ENCODE measurements at regions of chr17 and their contacts with region 1.

Region 1: DNA sequence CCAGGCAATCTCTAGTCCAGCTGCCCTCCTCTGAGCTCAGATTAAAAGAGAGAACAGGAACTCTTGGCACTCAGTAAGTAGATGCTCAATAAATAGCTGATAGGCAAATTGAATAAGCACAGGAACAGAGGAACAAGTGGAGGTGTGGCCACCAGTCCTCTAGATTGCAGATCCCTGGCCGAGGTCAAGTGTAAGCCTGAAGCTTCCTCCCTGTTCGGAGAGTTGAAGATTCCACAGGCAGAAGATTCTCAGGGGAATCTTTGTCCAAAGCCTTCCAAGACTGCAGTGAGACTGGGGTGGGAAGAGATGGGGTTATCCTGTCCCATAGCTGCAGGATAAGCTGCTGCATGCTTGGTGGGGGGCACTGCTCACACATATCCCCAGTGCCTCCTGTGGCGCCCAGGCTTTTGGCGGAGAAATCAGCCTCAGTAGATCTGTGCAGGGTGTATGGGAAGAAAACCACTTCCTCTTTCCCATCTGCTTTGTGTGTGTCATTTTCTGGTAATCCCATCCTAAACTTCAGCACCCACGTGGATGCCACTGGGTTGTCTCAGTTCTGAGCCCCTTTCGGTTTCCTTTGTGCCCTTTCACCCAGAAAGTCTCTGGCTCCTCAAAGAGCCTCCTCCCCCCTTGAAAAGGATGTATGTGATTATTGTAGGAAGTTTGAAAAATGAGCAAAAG is 12.1 kb downstream of the CD300A start:
- DNase-seq: peak in 2 of 5 donors; percentile 24 to 50
- H3K4me3 ChIP-seq: peak overlapping the region; percentile 9 to 30
- H3K4me3 Mint-ChIP-seq: peak overlapping the region; percentile 8 to 83 (median 77)
- H3K27ac ChIP-seq: no peak overlapping the region
- H3K27ac Mint-ChIP-seq: peak overlapping the region; percentile 56 to 93 (median 86)
- H3K4me1 ChIP-seq: peaks cover 58% of the 10 kb centered on the region
- H3K4me1 Mint-ChIP-seq: peaks cover 43 to 71% (median 57%) of the 10 kb centered on the region in 4 donors
- H3K27me3 ChIP-seq: no peaks in the 10 kb centered on the region
- H3K27me3 Mint-ChIP-seq: no peaks in the 10 kb centered on the region

Region 2: DNA sequence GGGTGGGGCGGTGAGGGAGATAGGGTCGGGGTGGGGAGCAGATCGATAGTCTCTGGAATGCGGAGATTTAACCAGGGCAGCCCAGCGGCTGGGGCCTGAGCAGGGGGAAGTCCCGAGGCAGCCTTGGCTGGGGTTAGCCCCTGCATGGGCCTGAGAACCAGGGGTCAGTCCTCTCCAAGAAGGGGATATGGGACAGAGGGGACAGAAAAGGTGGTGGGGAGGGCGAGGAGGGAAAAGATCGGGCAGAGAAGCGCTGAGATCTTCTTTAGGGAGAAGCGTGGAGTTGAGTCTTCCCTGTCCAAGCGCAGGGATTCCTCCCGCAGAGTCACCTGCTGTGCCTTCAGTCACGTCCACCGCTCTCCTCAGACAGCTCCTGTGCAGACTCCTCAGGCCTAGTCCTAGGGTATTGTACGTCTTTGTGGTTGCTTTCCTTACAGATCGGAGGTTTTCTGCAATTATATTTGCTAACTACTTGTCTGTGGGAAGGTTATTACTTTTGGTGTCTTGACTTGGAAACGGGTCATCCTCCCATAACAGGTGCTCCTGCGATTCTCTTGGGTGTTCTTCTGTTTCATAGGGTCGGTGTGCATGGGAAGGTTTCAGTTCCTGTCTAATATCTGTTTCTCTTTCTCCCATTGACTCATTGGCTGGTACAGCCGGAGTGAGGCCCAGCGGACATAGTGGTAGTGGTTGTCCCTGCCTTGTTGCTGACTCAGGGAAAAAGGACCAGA is 11.2 kb before region 1 on chr17:
- CTCF ChIA-PET with region 1: interaction called, 6 read pairs
- POLR2A ChIA-PET with region 1: interaction called, 33 read pairs
- intact Hi-C with region 1: no loop called
- DNase-seq: no peak
- H3K4me3 ChIP-seq: peak overlapping the region; percentile 54 to 55
- H3K4me3 Mint-ChIP-seq: no peak overlapping the region
- H3K27ac ChIP-seq: peak overlapping the region; percentile 51
- H3K27ac Mint-ChIP-seq: peak overlapping the region in 5 of 7 donors; percentile 64 to 96 (median 89)
- H3K4me1 ChIP-seq: peaks cover 75% of the 10 kb centered on the region
- H3K4me1 Mint-ChIP-seq: peaks cover 36 to 43% (median 40%) of the 10 kb centered on the region in 4 donors
- H3K27me3 ChIP-seq: no peaks in the 10 kb centered on the region
- H3K27me3 Mint-ChIP-seq: no peaks in the 10 kb centered on the region